Ascending aorta (tissue), 2 donors: ENCODE measurements at regions of chr2 and their contacts with region 1.

Region 1: GRCh38 chr2:100818606-100819369 is 1.2 kb upstream of the NPAS2 start:
- DNase-seq: peak; percentile 30 to 88
- H3K4me3 ChIP-seq: peak overlapping the region; percentile 91 to 95
- H3K27ac ChIP-seq: peak overlapping the region; percentile 95 to 96
- H3K4me1 ChIP-seq: peaks cover 1 to 11% of the 10 kb centered on the region in 2 donors
- H3K27me3 ChIP-seq: no peaks in the 10 kb centered on the region
- CTCF ChIP-seq: peak in 1 of 3 experiments; percentile 17

Region 2: DNA sequence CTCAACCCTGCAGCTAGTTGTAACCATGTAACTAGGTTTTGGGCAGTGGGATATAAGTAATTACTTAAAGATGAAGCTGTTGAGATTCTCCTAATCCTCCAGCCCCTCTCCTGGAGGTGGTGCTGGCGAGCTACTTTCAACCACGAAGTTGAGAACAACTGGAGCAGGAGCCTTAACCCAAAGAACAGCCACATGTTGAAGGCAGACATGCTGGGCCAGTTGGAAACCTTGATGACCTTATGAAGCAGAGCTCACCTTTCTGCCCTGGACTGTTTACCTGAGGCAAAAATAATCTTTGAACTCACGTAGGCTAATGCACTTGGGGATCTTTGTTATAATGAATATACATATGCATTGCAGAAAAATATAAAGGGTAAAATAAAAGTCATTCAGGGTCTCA is 88.4 kb before region 1 on chr2:
- intact Hi-C with region 1: loop called (anchors 1 kb)
- DNase-seq: no peak
- H3K4me3 ChIP-seq: no peak overlapping the region
- H3K27ac ChIP-seq: no peak overlapping the region
- H3K4me1 ChIP-seq: no peaks in the 10 kb centered on the region
- H3K27me3 ChIP-seq: no peaks in the 10 kb centered on the region
- CTCF ChIP-seq: peak; percentile 43 to 63 (median 59)

Region 3: DNA sequence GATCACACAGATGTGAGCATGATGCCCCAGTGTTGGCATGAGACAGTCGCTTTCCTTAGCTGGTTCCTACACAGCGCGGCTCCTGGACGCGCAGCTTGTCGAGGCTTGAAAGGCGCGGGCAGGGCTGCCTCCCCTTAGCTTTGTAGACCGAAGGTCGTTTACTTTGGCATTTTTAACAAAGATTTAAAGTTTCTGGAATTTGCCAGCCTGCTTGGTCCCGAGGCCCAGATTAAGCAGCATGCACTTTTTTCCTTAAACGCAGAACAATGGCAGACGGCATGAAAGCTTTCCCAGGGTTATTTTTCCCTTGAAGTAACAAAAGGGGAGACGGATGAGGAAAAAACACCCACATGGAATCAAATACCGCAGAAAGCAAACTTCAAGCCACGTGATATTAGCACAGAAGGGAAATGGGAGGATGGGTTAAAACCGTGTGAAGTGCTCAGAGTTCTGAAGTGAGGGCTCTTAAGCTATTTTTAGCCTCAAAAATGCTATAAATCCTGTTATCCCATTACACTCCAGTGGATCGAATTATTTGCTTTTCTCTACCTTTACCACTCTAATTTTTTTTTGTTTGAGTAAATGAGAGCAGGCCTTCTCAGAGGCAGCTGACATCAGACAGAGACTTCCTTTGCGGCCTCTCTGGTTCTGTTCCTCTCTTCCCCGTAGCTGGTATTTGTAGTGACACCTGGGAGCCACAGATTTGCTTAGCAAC is 56.9 kb after region 1 on chr2:
- intact Hi-C with region 1: loop called (anchors 2 kb)
- DNase-seq: no peak
- H3K4me3 ChIP-seq: peak overlapping the region in 1 of 2 donors; percentile 4
- H3K27ac ChIP-seq: peak overlapping the region; percentile 9 to 64
- H3K4me1 ChIP-seq: peaks cover 7 to 25% of the 10 kb centered on the region in 2 donors
- H3K27me3 ChIP-seq: no peaks in the 10 kb centered on the region
- CTCF ChIP-seq: no peak

Region 4: GRCh38 chr2:100957996-100958653 is 139.3 kb after region 1 on chr2:
- intact Hi-C with region 1: loop called (anchors 2 kb)
- DNase-seq: peak in 1 of 2 donors; percentile 84
- H3K4me3 ChIP-seq: peak overlapping the region; percentile 18 to 21
- H3K27ac ChIP-seq: peak overlapping the region; percentile 49 to 63
- H3K4me1 ChIP-seq: peaks cover 0 to 8% of the 10 kb centered on the region in 2 donors
- H3K27me3 ChIP-seq: no peaks in the 10 kb centered on the region
- CTCF ChIP-seq: no peak

Region 5: GRCh38 chr2:101160454-101160853 is 341.7 kb after region 1 on chr2:
- intact Hi-C with region 1: no loop called
- DNase-seq: no peak
- H3K4me3 ChIP-seq: no peak overlapping the region
- H3K27ac ChIP-seq: no peak overlapping the region
- H3K4me1 ChIP-seq: no peaks in the 10 kb centered on the region
- H3K27me3 ChIP-seq: no peaks in the 10 kb centered on the region
- CTCF ChIP-seq: no peak